HEK293 (cell line): ENCODE measurements at regions of chr6 and their contacts with region 1.

Region 1: DNA sequence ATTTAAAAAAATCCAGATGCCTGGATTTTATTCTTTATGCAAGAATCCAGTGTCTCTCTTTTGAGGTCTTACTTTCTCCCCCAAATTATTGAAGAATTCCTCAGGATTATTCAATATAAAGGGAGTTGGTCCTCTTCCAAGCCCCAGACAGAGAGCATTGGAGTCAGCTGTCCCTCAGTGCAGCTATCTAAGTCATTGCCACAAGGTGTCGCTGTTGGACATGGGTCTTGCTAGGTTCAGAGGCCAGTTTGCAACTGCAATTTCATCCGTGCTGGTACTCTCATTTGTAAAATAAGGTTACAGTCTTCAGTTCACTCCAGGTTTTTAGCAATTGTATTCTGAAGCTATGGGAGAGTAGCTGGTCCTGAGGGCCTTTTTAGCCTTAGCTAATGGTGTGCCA is 27.8 kb downstream of the CCN2 start:
- H3K4me3 ChIP-seq: no peak overlapping the region
- H3K27ac ChIP-seq: no peak overlapping the region
- H3K4me1 ChIP-seq: no peaks in the 10 kb centered on the region
- CTCF ChIP-seq: no peak

Region 2: GRCh38 chr6:130359736-130360135 is 1563.6 kb before region 1 on chr6:
- CTCF ChIA-PET with region 1: no interaction called
- POLR2A ChIA-PET with region 1: no interaction called
- H3K4me3 ChIP-seq: no peak overlapping the region
- H3K27ac ChIP-seq: no peak overlapping the region
- H3K4me1 ChIP-seq: peaks cover 2% of the 10 kb centered on the region; the same call in 1 of the 2 replicates
- CTCF ChIP-seq: no peak

Region 3: GRCh38 chr6:131303338-131303954 is 619.9 kb before region 1 on chr6:
- CTCF ChIA-PET with region 1: no interaction called
- POLR2A ChIA-PET with region 1: no interaction called
- H3K4me3 ChIP-seq: no peak overlapping the region
- H3K27ac ChIP-seq: no peak overlapping the region
- H3K4me1 ChIP-seq: no peaks in the 10 kb centered on the region
- CTCF ChIP-seq: no peak

Region 4: GRCh38 chr6:131317516-131317915 is 605.8 kb before region 1 on chr6:
- CTCF ChIA-PET with region 1: no interaction called
- POLR2A ChIA-PET with region 1: no interaction called
- H3K4me3 ChIP-seq: no peak overlapping the region
- H3K27ac ChIP-seq: no peak overlapping the region
- H3K4me1 ChIP-seq: no peaks in the 10 kb centered on the region
- CTCF ChIP-seq: no peak

Region 5: DNA sequence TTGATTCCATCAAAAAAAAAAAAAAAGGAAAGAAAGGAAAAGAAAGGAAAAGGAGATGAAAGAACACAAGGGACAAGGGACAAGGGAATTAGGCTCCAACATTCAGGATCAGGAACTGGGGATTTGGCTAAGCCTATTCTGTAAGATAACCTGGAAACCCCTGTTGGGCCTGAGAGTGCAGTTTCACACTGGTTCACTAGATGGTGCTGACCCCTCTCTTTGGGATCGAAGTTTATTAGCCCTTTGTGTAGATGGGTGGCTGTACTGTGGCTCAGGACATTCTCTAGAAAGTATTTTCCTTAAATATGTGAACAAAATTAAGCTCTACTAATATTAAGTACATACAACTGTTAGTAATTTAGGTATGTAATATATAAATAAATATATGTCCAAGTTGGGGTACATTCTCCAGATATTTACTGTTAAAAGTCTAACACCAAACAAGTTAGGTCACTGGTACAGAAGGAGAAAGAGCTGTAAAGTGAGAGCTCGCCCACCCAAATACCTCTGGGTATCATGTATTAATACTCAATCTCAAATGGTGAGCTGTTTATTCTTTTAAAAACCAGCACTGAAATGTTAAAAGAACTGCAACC is 228.4 kb before region 1 on chr6:
- CTCF ChIA-PET with region 1: interaction called, 188 read pairs
- POLR2A ChIA-PET with region 1: no interaction called
- H3K4me3 ChIP-seq: no peak overlapping the region
- H3K27ac ChIP-seq: no peak overlapping the region
- H3K4me1 ChIP-seq: no peaks in the 10 kb centered on the region
- CTCF ChIP-seq: peak; percentile 57

Region 6: GRCh38 chr6:131937703-131938631 is 14.6 kb after region 1 on chr6:
- CTCF ChIA-PET with region 1: interaction called, 88 read pairs
- POLR2A ChIA-PET with region 1: no interaction called
- H3K4me3 ChIP-seq: no peak overlapping the region
- H3K27ac ChIP-seq: no peak overlapping the region
- H3K4me1 ChIP-seq: no peaks in the 10 kb centered on the region
- CTCF ChIP-seq: no peak

Region 7: GRCh38 chr6:131998255-131998982 is 75.1 kb after region 1 on chr6:
- CTCF ChIA-PET with region 1: no interaction called
- POLR2A ChIA-PET with region 1: no interaction called
- H3K4me3 ChIP-seq: no peak overlapping the region
- H3K27ac ChIP-seq: no peak overlapping the region
- H3K4me1 ChIP-seq: no peaks in the 10 kb centered on the region
- CTCF ChIP-seq: no peak

Region 8: DNA sequence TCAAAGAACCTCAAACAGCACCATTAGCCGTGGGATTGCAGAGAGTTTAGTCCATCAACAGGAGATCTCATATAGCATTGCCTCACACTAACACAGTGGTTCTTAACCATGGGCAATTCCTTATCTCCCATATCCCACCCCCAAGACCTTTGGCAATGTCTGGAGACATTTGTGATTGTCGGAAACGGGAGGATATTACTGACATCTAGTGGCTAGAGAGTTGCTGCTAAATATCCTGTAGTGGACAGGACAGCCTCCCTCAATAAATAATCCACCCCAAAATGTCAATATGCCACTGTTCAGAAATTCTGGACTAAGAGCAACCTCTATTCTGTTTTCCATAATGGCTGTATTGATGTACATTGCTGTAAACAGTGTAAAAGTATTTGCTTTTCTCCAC is 237.9 kb after region 1 on chr6:
- CTCF ChIA-PET with region 1: interaction called, 18 read pairs
- POLR2A ChIA-PET with region 1: no interaction called
- H3K4me3 ChIP-seq: no peak overlapping the region
- H3K27ac ChIP-seq: no peak overlapping the region
- H3K4me1 ChIP-seq: no peaks in the 10 kb centered on the region
- CTCF ChIP-seq: peak; percentile 28; the same call in 1 of the 2 replicates

Region 9: GRCh38 chr6:132218059-132218696 is 294.8 kb after region 1 on chr6:
- CTCF ChIA-PET with region 1: interaction called, 91 read pairs
- POLR2A ChIA-PET with region 1: no interaction called
- H3K4me3 ChIP-seq: no peak overlapping the region
- H3K27ac ChIP-seq: no peak overlapping the region
- H3K4me1 ChIP-seq: no peaks in the 10 kb centered on the region
- CTCF ChIP-seq: no peak

Region 10: DNA sequence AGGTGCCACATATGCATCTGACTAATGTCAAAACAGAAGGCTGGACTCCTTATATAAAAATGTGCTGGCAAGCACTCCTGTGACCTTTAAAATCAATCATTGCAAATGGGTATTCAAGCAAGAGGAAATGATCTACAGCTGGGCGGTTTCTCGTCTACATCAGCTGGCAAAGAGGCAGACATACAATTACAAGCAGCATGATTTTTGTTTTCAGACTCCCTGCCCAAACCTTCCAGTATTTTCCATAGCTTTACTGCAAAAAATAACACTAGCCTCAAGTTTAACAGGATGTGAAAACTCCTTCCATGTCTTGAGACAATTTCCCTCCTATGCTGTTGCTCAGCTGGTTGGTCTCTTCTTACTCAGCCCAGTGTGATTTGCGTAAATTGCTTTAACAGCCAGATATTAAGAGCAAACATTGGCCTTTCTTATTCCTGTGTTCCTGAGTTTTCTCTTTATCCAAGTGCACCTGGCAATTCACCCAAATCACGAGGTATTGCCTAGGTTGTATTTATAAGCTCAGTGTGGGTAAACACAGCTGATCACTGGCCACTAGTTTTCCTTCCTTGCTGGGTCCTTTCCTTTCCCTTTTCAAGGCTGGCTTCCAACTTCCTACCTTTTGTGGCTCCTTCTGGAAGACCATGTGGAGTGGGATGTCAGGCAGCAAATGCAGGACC is 347.5 kb after region 1 on chr6:
- CTCF ChIA-PET with region 1: interaction called, 72 read pairs
- POLR2A ChIA-PET with region 1: no interaction called
- H3K4me3 ChIP-seq: no peak overlapping the region
- H3K27ac ChIP-seq: no peak overlapping the region
- H3K4me1 ChIP-seq: no peaks in the 10 kb centered on the region
- CTCF ChIP-seq: no peak

Region 11: DNA sequence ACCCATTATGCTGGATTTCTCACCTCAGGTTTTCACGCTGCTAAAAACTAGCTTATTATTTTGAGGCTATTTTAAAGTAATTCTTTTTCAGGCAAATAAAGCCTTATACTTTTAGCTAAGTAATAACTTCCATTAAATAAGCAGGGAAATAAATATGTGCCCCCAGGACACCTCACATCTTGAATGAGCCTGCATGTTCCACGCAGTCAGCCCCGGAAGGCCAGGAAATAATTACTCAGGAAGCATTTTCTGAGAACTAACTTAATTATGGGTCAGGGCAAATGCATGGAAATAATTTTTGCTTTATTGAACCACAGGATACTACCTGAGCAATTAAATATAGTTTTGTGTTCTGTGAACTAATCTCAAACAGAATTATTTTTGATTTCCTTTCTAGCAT is 548.4 kb after region 1 on chr6:
- CTCF ChIA-PET with region 1: interaction called, 12 read pairs
- POLR2A ChIA-PET with region 1: no interaction called
- H3K4me3 ChIP-seq: no peak overlapping the region
- H3K27ac ChIP-seq: no peak overlapping the region
- H3K4me1 ChIP-seq: peaks cover 4% of the 10 kb centered on the region; the same call in 1 of the 2 replicates
- CTCF ChIP-seq: no peak